Mammary epithelial cell (primary cell): ENCODE measurements at regions of chr5 and their contacts with region 1.

Region 1: DNA sequence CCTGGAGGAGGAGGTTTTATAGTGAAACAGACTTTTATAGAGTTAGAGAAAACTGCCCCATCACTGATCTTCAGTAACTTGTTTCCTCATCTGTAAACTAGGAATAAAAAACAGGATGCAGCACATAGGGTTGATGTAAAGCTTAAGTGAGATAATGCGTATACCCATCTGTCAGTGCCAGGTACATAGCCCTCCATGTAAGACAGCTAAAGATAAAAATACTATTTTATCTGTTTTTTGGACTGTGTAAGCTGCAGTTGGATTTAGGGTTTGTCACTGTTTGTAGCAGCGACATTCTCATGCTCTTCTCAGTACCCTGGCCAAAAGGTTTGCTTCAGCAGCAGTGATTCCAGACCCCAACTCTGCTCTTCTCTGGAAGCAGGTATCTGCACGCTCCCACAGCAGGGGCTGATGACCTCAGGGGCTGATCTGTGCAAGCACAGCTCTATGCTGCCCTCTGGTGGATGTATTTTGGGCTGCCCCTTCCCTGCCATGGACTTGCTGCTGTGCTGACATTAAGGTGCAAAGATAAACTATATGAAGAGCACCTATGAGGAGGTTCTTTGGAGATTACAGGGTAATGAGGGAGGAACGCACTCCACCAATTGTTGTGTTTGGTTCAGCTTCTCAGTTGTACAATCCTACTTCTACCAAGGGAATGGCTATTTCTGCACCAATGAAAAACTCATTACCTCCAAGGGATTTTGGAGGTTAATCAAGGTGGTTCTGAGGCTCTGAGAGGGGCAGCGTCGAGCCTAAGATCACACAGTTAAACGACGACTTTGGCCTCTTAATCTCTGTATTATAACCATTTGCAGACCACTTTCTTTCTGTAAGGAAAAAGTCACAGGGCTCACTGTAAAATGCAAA is 13.1 kb downstream of the HMHB1 start:
- DNase-seq: peak; percentile 55
- H3K4me3 ChIP-seq: no peak overlapping the region
- H3K27ac ChIP-seq: no peak overlapping the region
- H3K4me1 ChIP-seq: no peaks in the 10 kb centered on the region
- H3K27me3 ChIP-seq: peaks cover 2% of the 10 kb centered on the region
- CTCF ChIP-seq: peak; percentile 94 to 97

Region 2: GRCh38 chr5:142713121-142713706 is 1111.9 kb before region 1 on chr5:
- CTCF ChIA-PET with region 1: no interaction called
- dilution Hi-C with region 1: no loop called
- in situ Hi-C with region 1: no loop called
- intact Hi-C with region 1: loop called (anchors 5 kb)
- DNase-seq: peak; percentile 79
- H3K4me3 ChIP-seq: peak overlapping the region; percentile 59 to 70 (median 67)
- H3K27ac ChIP-seq: peak overlapping the region; percentile 68
- H3K4me1 ChIP-seq: peaks cover 5% of the 10 kb centered on the region
- H3K27me3 ChIP-seq: no peaks in the 10 kb centered on the region
- CTCF ChIP-seq: peak; percentile 73 to 88

Region 3: GRCh38 chr5:143106174-143106573 is 718.9 kb before region 1 on chr5:
- CTCF ChIA-PET with region 1: no interaction called
- dilution Hi-C with region 1: no loop called
- in situ Hi-C with region 1: no loop called
- intact Hi-C with region 1: loop called (anchors 5 kb)
- DNase-seq: peak; percentile 53
- H3K4me3 ChIP-seq: no peak overlapping the region
- H3K27ac ChIP-seq: no peak overlapping the region
- H3K4me1 ChIP-seq: no peaks in the 10 kb centered on the region
- H3K27me3 ChIP-seq: no peaks in the 10 kb centered on the region
- CTCF ChIP-seq: peak in 1 of 2 donors; percentile 32

Region 4: GRCh38 chr5:143355720-143356119 is 469.4 kb before region 1 on chr5:
- CTCF ChIA-PET with region 1: no interaction called
- dilution Hi-C with region 1: no loop called
- in situ Hi-C with region 1: no loop called
- intact Hi-C with region 1: loop called (anchors 1 kb)
- DNase-seq: peak; percentile 88
- H3K4me3 ChIP-seq: peak overlapping the region in 1 of 3 experiments; percentile 15
- H3K27ac ChIP-seq: peak overlapping the region; percentile 39
- H3K4me1 ChIP-seq: peaks cover 21% of the 10 kb centered on the region
- H3K27me3 ChIP-seq: no peaks in the 10 kb centered on the region
- CTCF ChIP-seq: no peak

Region 5: GRCh38 chr5:143393524-143393923 is 431.6 kb before region 1 on chr5:
- CTCF ChIA-PET with region 1: no interaction called
- dilution Hi-C with region 1: no loop called
- in situ Hi-C with region 1: no loop called
- intact Hi-C with region 1: no loop called
- DNase-seq: no peak
- H3K4me3 ChIP-seq: peak overlapping the region in 2 of 3 experiments; percentile 9 to 72
- H3K27ac ChIP-seq: peak overlapping the region; percentile 7
- H3K4me1 ChIP-seq: peaks cover 14% of the 10 kb centered on the region
- H3K27me3 ChIP-seq: no peaks in the 10 kb centered on the region
- CTCF ChIP-seq: no peak

Region 6: GRCh38 chr5:143648696-143649095 is 176.4 kb before region 1 on chr5:
- CTCF ChIA-PET with region 1: no interaction called
- dilution Hi-C with region 1: no loop called
- in situ Hi-C with region 1: no loop called
- intact Hi-C with region 1: loop called (anchors 1 kb)
- DNase-seq: no peak
- H3K4me3 ChIP-seq: no peak overlapping the region
- H3K27ac ChIP-seq: no peak overlapping the region
- H3K4me1 ChIP-seq: peaks cover 7% of the 10 kb centered on the region
- H3K27me3 ChIP-seq: peaks cover 9% of the 10 kb centered on the region
- CTCF ChIP-seq: peak; percentile 29 to 38

Region 7: DNA sequence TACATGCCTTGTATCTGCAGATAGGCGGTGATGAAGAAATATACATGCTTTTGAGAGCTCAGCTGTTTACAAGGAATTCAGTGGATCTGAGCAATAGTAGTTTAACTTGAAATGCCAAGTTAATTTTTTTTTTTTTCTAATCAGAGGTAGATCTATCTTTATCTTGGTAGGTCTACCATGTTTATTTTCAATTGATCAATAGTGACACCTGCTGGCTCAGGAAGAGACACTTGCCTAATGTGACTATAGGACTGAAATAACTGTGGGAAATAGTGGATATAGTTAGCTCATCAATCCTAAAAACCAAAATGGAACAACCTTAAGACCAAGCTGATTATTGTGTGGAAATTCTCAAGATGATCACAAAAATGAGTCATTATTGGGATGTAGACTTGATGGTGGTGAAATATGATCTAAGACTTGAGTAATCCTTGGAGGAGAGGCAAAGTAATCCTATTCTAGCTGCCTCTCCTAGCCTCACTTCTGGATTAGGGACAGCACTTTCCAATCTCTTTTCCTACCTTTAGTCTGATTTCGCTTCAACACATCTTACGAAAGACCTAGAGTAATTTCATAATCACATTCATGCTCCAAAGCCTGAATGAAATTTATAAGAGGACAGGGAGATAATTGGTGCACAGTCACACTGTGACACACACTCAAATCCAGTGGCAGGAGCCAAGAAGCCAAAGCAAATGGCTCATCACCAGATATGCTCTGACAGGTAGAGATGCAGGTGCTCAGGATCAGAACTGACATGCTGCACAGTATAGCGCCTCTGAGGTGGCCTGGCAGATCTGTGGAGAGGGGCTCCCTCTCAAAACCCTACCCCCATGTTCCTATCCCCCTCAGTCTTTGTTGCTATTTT is 143.2 kb after region 1 on chr5:
- CTCF ChIA-PET with region 1: no interaction called
- dilution Hi-C with region 1: no loop called
- in situ Hi-C with region 1: loop called in 1 of 2 experiments (anchors 5 kb)
- intact Hi-C with region 1: loop called (anchors 1 kb)
- DNase-seq: peak; percentile 70
- H3K4me3 ChIP-seq: no peak overlapping the region
- H3K27ac ChIP-seq: no peak overlapping the region
- H3K4me1 ChIP-seq: peaks cover 7% of the 10 kb centered on the region
- H3K27me3 ChIP-seq: no peaks in the 10 kb centered on the region
- CTCF ChIP-seq: peak; percentile 39 to 59